Dorsolateral prefrontal cortex (tissue), 120 donors: ENCODE measurements at regions of chr16 and their contacts with region 1.

Region 1: DNA sequence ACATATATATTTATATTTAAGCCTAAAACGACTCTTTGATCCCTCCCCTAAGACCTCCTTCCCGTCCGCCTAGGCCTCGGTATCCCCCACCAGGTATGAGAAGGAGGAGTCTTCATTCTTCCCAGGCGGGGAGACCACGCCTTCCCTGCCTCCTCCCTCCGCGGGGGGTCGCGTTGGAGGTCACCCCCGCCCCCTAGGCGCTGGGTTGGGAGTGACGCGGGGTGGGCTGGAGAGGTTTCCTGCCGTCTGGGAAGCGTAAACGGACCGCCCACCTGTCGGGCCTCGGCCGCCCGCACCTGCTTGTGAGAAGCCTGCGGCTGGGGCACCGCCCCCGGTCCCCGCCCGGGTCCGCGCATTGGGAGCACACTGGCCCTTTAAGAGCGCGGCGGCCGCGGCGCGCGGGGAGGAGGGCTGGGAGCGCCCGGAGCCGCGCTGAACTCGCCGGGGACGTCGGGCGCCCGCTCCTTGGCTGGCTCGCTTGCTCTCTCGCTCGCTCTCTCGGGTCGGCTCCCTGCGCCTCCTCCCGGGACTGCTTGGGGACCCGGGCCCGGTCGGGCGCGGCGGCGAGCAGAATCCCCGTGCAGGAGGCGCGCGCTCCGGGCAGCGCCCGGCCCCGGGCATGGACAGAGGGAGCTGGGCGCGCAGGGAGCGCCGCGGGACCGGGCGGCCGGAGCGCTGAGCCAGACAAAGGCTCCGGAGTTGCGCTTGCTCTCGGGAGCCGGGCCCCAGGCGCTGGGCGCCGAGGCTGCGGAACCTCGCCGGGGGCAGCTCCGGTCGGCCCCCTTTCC is at the start of gene MMP15:
- DNase-seq: peak in 6 of 10 donors; percentile 36 to 76 (median 59)
- H3K4me3 ChIP-seq: peak within 1 kb of the TSS; percentile 45 to 82 (median 68)
- H3K27ac ChIP-seq: peak within 1 kb of the TSS in 34 of 59 donors; percentile 3 to 81 (median 52)
- H3K27me3 ChIP-seq: peaks cover 0 to 6% (median 0%) of the 10 kb centered on the region in 45 donors
- CTCF ChIP-seq: peak in 2 of 56 donors; percentile 3 to 9
- total RNA-seq, gene MMP15: 4.7 to 17.4 (median 8.2) TPM

Region 2: DNA sequence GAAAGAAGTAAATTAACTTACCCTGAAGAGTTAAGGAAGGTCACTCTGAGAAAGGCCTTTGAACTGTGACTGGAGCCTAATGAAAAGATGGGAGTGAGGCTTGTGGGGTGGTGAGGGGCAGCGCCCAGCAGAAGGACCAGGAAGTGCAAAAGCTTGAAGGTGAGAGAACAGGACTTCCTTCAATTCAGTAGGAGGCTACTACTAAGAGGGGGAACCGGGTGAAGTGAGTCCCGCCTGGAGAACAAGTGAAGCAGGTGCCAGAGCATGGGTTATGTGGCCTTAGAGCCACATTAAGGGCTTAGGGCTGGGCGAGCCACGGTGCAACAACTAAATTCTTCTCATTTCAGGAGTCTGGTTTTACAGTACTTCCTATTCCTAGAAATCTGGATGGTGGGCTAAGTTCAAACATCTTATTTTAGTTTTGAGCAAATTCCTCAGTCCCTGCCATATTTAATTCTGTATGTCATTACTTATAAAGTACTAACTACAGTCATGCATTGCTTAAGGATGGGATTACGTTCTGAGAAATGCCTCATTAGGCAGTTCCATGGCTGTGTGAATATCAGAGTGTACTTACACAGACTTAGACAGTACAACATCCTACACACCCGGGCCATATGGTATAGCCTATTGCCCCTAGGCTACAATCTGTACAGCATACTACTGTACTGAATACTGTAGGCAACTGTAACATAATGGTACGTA is 98.5 kb after region 1 on chr16:
- intact Hi-C with region 1: loop called (anchors 2 to 5 kb)
- DNase-seq: no peak
- H3K4me3 ChIP-seq: no peak overlapping the region
- H3K27ac ChIP-seq: peak overlapping the region in 14 of 59 donors; percentile 4 to 45 (median 28)
- H3K27me3 ChIP-seq: no peaks in the 10 kb centered on the region
- CTCF ChIP-seq: no peak

Region 3: DNA sequence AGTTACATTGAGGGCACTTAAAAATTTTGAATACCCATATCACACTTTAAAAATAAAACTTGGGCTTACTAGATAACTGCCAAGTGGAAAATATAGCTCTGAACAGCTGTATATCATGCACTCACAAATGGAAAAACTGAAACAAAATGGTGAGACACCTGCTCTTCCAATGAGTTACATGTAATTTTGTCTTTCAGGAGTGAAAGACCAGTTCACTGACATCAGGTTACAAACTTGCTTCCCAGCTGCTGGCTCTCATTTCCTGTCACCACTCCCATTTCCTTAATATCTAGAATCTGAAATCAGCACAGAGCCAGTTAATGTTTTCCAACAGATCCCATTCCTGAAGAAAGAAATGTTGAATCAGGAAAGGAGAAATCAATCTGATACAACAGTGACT is 161.5 kb after region 1 on chr16:
- intact Hi-C with region 1: no loop called
- DNase-seq: no peak
- H3K4me3 ChIP-seq: no peak overlapping the region
- H3K27ac ChIP-seq: peak overlapping the region in 1 of 59 donors; percentile 28
- H3K27me3 ChIP-seq: no peaks in the 10 kb centered on the region
- CTCF ChIP-seq: no peak

Region 4: GRCh38 chr16:58198022-58198683 is 172.6 kb after region 1 on chr16 and contains the start of gene CSNK2A2:
- intact Hi-C with region 1: loop called (anchors 5 kb)
- DNase-seq: peak; percentile 30 to 76 (median 56)
- H3K4me3 ChIP-seq: peak within 1 kb of the TSS; percentile 51 to 88 (median 75)
- H3K27ac ChIP-seq: peak within 1 kb of the TSS in 5 of 59 donors; percentile 63 to 85 (median 71)
- H3K27me3 ChIP-seq: peaks cover 0 to 3% (median 0%) of the 10 kb centered on the region in 45 donors
- CTCF ChIP-seq: peak in 31 of 56 donors; percentile 13 to 60 (median 28)
- total RNA-seq, gene CSNK2A2: 39.0 to 73.3 (median 54.9) TPM